Naive thymus-derived CD8-positive, alpha-beta T cell (primary cell): ENCODE measurements at regions of chr11 and their contacts with region 1.

Region 1: GRCh38 chr11:118907051-118908042 is 18.4 kb downstream of the BCL9L start:
- DNase-seq: peak; percentile 70 to 96 (median 86)
- ATAC-seq: peak; percentile 47 to 59
- H3K4me3 Mint-ChIP-seq: peak overlapping the region; percentile 42 to 94 (median 72)
- H3K27ac Mint-ChIP-seq: peak overlapping the region; percentile 88 to 98 (median 96)
- H3K4me1 Mint-ChIP-seq: peaks cover 31 to 67% (median 53%) of the 10 kb centered on the region in 4 donors
- H3K27me3 Mint-ChIP-seq: no peaks in the 10 kb centered on the region

Region 2: GRCh38 chr11:118689851-118690552 is 217.3 kb before region 1 on chr11:
- POLR2A ChIA-PET with region 1: interaction called, 10 read pairs
- DNase-seq: peak; percentile 71 to 91 (median 81)
- ATAC-seq: peak; percentile 87 to 94
- H3K4me3 Mint-ChIP-seq: peak overlapping the region; percentile 50 to 82 (median 76)
- H3K27ac Mint-ChIP-seq: peak overlapping the region; percentile 22 to 97 (median 77)
- H3K4me1 Mint-ChIP-seq: peaks cover 29 to 70% (median 51%) of the 10 kb centered on the region in 4 donors
- H3K27me3 Mint-ChIP-seq: no peaks in the 10 kb centered on the region

Region 3: GRCh38 chr11:118699506-118700220 is 207.7 kb before region 1 on chr11:
- POLR2A ChIA-PET with region 1: interaction called, 22 read pairs
- DNase-seq: peak; percentile 36 to 93 (median 82)
- ATAC-seq: peak; percentile 97 to 98
- H3K4me3 Mint-ChIP-seq: peak overlapping the region; percentile 62 to 89 (median 76)
- H3K27ac Mint-ChIP-seq: peak overlapping the region; percentile 92 to 100 (median 98)
- H3K4me1 Mint-ChIP-seq: peaks cover 11 to 80% (median 72%) of the 10 kb centered on the region in 4 donors
- H3K27me3 Mint-ChIP-seq: no peaks in the 10 kb centered on the region

Region 4: DNA sequence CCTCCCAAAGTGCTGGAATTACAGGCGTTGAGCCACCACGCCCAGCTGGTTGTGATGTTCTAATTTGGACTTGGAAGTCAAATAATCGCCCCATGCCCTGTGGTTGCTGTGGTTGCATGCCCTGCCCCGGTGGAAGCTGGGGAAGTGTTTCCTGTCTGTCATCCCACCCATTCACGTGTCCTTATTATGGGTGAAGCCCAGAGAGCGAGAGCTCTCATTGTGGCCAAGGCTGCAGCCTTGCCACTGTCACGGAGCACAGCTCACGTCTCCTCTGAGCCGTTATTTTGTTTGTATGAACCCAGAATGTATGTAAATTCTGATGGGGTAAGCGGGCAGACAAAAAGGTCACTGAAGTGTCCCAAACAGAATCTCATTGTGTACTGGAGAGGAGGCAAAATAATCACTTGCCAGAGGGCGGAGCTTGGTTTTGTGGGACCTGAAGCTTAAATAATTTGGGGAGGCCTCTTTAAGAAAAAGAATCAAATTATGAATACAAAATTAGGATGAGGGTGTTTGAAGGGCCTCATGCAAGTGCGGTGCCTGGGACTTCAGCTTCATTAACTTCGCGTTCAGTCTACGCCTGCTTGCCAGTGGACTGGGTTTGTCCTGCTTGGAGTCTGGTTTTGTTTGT is 202.1 kb before region 1 on chr11:
- POLR2A ChIA-PET with region 1: interaction called, 22 read pairs
- DNase-seq: peak in 9 of 10 donors; percentile 31 to 80 (median 59)
- ATAC-seq: peak; percentile 78 to 87
- H3K4me3 Mint-ChIP-seq: peak overlapping the region; percentile 60 to 89 (median 78)
- H3K27ac Mint-ChIP-seq: peak overlapping the region; percentile 90 to 99 (median 96)
- H3K4me1 Mint-ChIP-seq: peaks cover 22 to 55% (median 46%) of the 10 kb centered on the region in 4 donors
- H3K27me3 Mint-ChIP-seq: no peaks in the 10 kb centered on the region

Region 5: GRCh38 chr11:118878163-118878563 is 29.2 kb before region 1 on chr11:
- POLR2A ChIA-PET with region 1: interaction called, 126 read pairs
- DNase-seq: peak in 4 of 10 donors; percentile 30 to 67 (median 56)
- ATAC-seq: peak; percentile 11 to 24
- H3K4me3 Mint-ChIP-seq: peak overlapping the region; percentile 25 to 85 (median 64)
- H3K27ac Mint-ChIP-seq: peak overlapping the region; percentile 97 to 100 (median 100)
- H3K4me1 Mint-ChIP-seq: peaks cover 47 to 93% (median 91%) of the 10 kb centered on the region in 4 donors
- H3K27me3 Mint-ChIP-seq: no peaks in the 10 kb centered on the region